B cell (primary cell): ENCODE measurements at regions of chr2 and their contacts with region 1.

Region 1: GRCh38 chr2:68925295-68925896 is 27.3 kb downstream of the GKN2 start:
- DNase-seq: peak; percentile 76
- ATAC-seq: peak; percentile 56
- H3K4me3 ChIP-seq: no peak overlapping the region
- H3K4me3 Mint-ChIP-seq: no peak overlapping the region
- H3K27ac ChIP-seq: no peak overlapping the region
- H3K27ac Mint-ChIP-seq: no peak overlapping the region
- H3K4me1 ChIP-seq: no peaks in the 10 kb centered on the region
- H3K4me1 Mint-ChIP-seq: no peaks in the 10 kb centered on the region
- H3K27me3 ChIP-seq: no peaks in the 10 kb centered on the region
- H3K27me3 Mint-ChIP-seq: peaks cover 4% of the 10 kb centered on the region
- CTCF ChIP-seq: peak; percentile 95

Region 2: DNA sequence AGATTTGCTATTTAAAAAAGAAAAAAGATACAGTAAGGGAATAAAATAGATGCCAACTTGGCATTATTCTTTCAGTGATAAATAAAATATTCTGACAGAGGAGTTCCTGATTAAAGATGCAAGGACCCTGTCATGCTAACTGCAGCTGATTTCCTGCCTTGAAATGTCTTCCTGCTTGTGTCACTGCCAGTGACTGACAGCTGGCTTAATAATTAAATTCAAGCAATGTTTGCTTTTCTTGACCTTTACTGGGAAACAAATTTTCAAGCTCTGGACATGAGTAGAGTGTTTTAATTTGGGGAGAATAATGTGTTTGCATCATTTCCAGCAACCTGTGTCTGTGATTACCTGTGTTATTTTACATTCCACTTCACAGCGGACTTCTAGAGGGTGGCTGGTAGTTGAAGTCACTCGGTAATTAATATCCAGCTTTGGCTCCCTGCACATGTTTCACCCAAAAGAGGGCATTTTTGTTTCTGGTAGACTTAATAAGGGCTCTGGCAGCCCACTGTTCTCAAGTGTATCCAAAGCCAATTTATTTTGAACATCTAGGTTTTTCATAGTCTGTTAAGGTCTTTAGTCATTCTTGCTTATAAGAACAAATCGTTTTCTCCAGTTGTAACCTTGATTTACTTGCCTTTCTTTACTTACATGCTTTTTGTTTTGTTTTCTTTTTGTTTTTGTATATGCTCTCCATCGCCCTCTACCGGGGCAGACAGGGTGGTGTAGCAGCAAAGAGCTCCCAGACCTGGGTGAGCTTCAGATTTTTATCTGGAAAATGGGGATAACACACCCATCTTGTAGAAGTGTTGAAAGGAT is 330.5 kb before region 1 on chr2:
- CTCF ChIA-PET with region 1: interaction called, 27 read pairs
- POLR2A ChIA-PET with region 1: no interaction called
- intact Hi-C with region 1: loop called (anchors 2 kb)
- DNase-seq: peak; percentile 64
- ATAC-seq: no peak
- H3K4me3 ChIP-seq: no peak overlapping the region
- H3K4me3 Mint-ChIP-seq: peak overlapping the region; percentile 9
- H3K27ac ChIP-seq: no peak overlapping the region
- H3K27ac Mint-ChIP-seq: no peak overlapping the region
- H3K4me1 ChIP-seq: peaks cover 5 to 9% of the 10 kb centered on the region in 2 donors
- H3K4me1 Mint-ChIP-seq: peaks cover 14% of the 10 kb centered on the region
- H3K27me3 ChIP-seq: no peaks in the 10 kb centered on the region
- H3K27me3 Mint-ChIP-seq: no peaks in the 10 kb centered on the region
- CTCF ChIP-seq: peak; percentile 96

Region 3: GRCh38 chr2:68734688-68735525 is 190.5 kb before region 1 on chr2 and contains the start of gene ARHGAP25:
- CTCF ChIA-PET with region 1: interaction called, 11 read pairs
- POLR2A ChIA-PET with region 1: no interaction called
- intact Hi-C with region 1: no loop called
- DNase-seq: peak; percentile 83
- ATAC-seq: peak; percentile 78
- H3K4me3 ChIP-seq: peak within 1 kb of the TSS; percentile 47 to 92 (median 64)
- H3K4me3 Mint-ChIP-seq: no peak within 1 kb of the TSS
- H3K27ac ChIP-seq: peak within 1 kb of the TSS; percentile 93
- H3K27ac Mint-ChIP-seq: no peak within 1 kb of the TSS
- H3K4me1 ChIP-seq: peaks cover 66 to 77% of the 10 kb centered on the region in 2 donors
- H3K4me1 Mint-ChIP-seq: peaks cover 55% of the 10 kb centered on the region
- H3K27me3 ChIP-seq: no peaks in the 10 kb centered on the region
- H3K27me3 Mint-ChIP-seq: no peaks in the 10 kb centered on the region
- CTCF ChIP-seq: no peak
- total RNA-seq, gene ARHGAP25: 207 and 221 TPM in 2 replicates

Region 4: GRCh38 chr2:68837164-68837860 is 88.1 kb before region 1 on chr2:
- CTCF ChIA-PET with region 1: interaction called, 13 read pairs
- POLR2A ChIA-PET with region 1: no interaction called
- intact Hi-C with region 1: no loop called
- DNase-seq: peak; percentile 78
- ATAC-seq: peak; percentile 46
- H3K4me3 ChIP-seq: peak overlapping the region in 1 of 5 experiments; percentile 8
- H3K4me3 Mint-ChIP-seq: peak overlapping the region; percentile 26
- H3K27ac ChIP-seq: no peak overlapping the region
- H3K27ac Mint-ChIP-seq: peak overlapping the region; percentile 75
- H3K4me1 ChIP-seq: peaks cover 42 to 47% of the 10 kb centered on the region in 2 donors
- H3K4me1 Mint-ChIP-seq: peaks cover 54% of the 10 kb centered on the region
- H3K27me3 ChIP-seq: no peaks in the 10 kb centered on the region
- H3K27me3 Mint-ChIP-seq: no peaks in the 10 kb centered on the region
- CTCF ChIP-seq: peak; percentile 82